Endothelial cell of umbilical vein (primary cell): ENCODE measurements at regions of chr2 and their contacts with region 1.

Region 1: DNA sequence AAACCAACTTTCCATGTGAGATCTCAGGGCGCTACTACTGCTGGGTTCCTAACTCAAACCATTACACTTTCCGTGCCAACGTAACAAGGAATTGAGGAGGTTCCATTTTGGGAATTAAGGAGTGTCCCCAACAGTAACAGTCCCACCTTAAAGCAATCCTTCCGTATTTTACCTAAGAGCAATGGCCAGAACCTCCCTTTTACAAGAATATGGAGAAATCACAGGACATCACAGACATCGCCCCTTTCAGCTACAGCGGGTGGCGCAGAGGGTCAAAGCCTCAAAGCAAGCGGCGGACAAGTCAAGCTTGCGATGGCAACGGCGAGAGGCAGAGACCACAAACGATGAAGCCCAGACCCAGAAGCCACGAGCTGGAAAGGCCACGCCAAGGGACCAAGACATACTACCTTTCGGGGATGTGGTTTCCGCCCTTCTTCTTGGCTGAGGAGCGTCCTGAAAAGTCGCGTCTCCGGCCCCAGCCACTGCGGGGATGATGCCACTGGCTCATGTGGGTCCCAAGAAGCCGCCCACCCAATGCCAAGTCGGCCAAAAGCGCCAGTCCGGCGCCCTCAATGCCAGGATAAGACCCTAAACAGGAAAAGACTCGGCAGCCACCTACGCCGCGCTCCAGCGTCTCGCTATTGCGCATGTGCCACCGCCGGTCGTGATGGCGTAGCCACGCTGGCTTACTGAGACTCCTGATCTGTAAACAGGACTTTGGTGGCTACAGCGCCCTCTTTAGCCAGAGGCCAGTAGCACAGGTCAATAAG is at the start of gene DUSP11:
- DNase-seq: peak; percentile 97
- H3K4me3 ChIP-seq: peak within 1 kb of the TSS; percentile 66 to 92 (median 68)
- H3K27ac ChIP-seq: peak within 1 kb of the TSS; percentile 36
- H3K4me1 ChIP-seq: peaks cover 9% of the 10 kb centered on the region
- H3K27me3 ChIP-seq: no peaks in the 10 kb centered on the region
- CTCF ChIP-seq: peak; percentile 92 to 95
- POLR2A ChIP-seq: peak; percentile 92
- total RNA-seq, gene DUSP11: 25.3 and 27.0 TPM in 2 replicates

Region 2: GRCh38 chr2:73685770-73686438 is 93.7 kb before region 1 on chr2:
- CTCF ChIA-PET with region 1: no interaction called
- POLR2A ChIA-PET with region 1: no interaction called
- dilution Hi-C with region 1: no loop called
- intact Hi-C with region 1: loop called (anchors 10 kb)
- DNase-seq: no peak
- H3K4me3 ChIP-seq: no peak overlapping the region
- H3K27ac ChIP-seq: no peak overlapping the region
- H3K4me1 ChIP-seq: no peaks in the 10 kb centered on the region
- H3K27me3 ChIP-seq: peaks cover 9 to 14% of the 10 kb centered on the region in 2 experiments
- CTCF ChIP-seq: no peak
- POLR2A ChIP-seq: no peak

Region 3: GRCh38 chr2:73716543-73717250 is 63.0 kb before region 1 on chr2:
- CTCF ChIA-PET with region 1: no interaction called
- POLR2A ChIA-PET with region 1: no interaction called
- dilution Hi-C with region 1: no loop called
- intact Hi-C with region 1: no loop called
- DNase-seq: peak; percentile 80
- H3K4me3 ChIP-seq: no peak overlapping the region
- H3K27ac ChIP-seq: no peak overlapping the region
- H3K4me1 ChIP-seq: no peaks in the 10 kb centered on the region
- H3K27me3 ChIP-seq: peaks cover 0 to 10% of the 10 kb centered on the region in 2 experiments
- CTCF ChIP-seq: no peak
- POLR2A ChIP-seq: no peak

Region 4: GRCh38 chr2:73746015-73746876 is 33.4 kb before region 1 on chr2:
- CTCF ChIA-PET with region 1: no interaction called
- POLR2A ChIA-PET with region 1: no interaction called
- dilution Hi-C with region 1: no loop called
- intact Hi-C with region 1: loop called (anchors 1 kb)
- DNase-seq: peak; percentile 94
- H3K4me3 ChIP-seq: no peak overlapping the region
- H3K27ac ChIP-seq: peak overlapping the region; percentile 91
- H3K4me1 ChIP-seq: peaks cover 17% of the 10 kb centered on the region
- H3K27me3 ChIP-seq: no peaks in the 10 kb centered on the region
- CTCF ChIP-seq: peak; percentile 14 to 30
- POLR2A ChIP-seq: no peak